Transverse colon (tissue), 4 donors: ENCODE measurements at regions of chr2 and their contacts with region 1.

Region 1: DNA sequence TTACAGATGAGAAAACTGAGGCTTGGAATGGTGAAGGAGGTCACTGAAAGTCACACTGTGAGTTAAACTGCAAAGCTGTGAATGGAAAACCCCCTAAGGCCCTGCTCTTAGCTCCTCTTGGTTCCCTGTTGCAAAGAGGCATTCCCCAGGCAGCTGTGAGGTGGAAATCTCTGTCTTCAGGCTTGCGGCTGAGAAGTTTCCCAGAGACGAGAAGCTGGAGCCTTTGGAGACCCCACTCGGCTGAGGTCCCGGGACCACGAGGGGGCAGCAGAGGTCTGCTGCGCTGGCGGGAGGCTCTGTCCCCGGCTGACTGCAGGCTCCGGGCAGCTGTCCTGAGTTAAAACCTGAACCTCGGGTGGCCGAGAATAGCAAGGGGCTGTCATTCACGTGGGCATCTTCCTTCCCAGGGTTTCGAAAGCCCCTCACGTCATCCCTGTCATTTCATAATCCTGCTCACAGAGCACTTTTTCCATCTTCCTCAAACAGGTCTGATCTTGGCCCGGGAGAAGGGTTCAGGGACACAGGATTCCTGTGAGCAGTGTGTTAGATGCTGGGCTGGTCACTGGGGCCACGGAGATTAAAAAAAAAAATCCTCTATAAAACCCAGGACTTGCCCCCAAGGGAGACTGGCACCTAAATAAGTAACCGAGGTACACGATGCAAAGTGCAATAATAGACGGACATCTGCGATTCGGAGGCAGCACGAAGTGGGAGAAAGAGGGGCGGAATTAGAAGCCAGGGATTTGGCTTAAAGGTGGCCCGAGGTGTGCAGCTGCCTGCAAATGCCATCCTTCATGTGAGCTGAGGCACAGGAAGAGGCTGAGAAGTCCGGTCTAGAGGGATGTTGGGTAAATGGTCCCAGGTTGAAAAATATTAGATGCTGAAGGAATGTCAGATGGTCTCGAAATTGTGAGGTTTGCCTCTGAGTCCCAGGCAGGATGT is 24.6 kb upstream of the ATOH8 start:
- DNase-seq: peak; percentile 89
- H3K4me3 ChIP-seq: no peak overlapping the region
- H3K27ac ChIP-seq: no peak overlapping the region
- H3K4me1 ChIP-seq: peaks cover 0 to 11% (median 4%) of the 10 kb centered on the region in 4 donors
- H3K27me3 ChIP-seq: peaks cover 4% of the 10 kb centered on the region
- CTCF ChIP-seq: peak; percentile 88 to 94 (median 90)
- EP300 ChIP-seq: no peak
- POLR2A ChIP-seq: no peak

Region 2: GRCh38 chr2:85662899-85663593 is 66.1 kb before region 1 on chr2:
- in situ Hi-C with region 1: no loop called
- intact Hi-C with region 1: no loop called
- DNase-seq: no peak
- H3K4me3 ChIP-seq: no peak overlapping the region
- H3K27ac ChIP-seq: no peak overlapping the region
- H3K4me1 ChIP-seq: no peaks in the 10 kb centered on the region
- H3K27me3 ChIP-seq: no peaks in the 10 kb centered on the region
- CTCF ChIP-seq: no peak
- EP300 ChIP-seq: no peak
- POLR2A ChIP-seq: no peak

Region 3: DNA sequence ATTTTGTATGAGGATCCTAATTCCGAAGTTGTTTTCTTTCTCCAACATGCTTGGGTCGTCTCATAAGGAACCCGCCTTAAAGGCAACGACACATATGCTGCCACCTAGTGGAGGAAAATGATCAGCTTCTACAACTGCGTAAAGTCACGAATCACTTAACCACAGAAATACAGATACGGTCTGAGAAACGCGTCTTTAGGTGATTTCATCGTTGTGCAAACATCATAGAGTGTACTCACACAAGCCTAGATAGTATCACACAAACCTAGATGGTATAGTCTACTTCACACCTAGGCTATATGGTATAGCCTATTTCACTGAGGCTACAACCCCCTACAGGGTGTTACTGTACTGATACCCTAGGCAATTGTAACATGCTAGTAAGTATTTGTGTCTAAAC is 21.9 kb before region 1 on chr2:
- in situ Hi-C with region 1: no loop called
- intact Hi-C with region 1: no loop called
- DNase-seq: peak; percentile 58
- H3K4me3 ChIP-seq: no peak overlapping the region
- H3K27ac ChIP-seq: peak overlapping the region in 3 of 4 donors; percentile 39 to 58 (median 42)
- H3K4me1 ChIP-seq: peaks cover 0 to 47% (median 6%) of the 10 kb centered on the region in 4 donors
- H3K27me3 ChIP-seq: no peaks in the 10 kb centered on the region
- CTCF ChIP-seq: peak; percentile 80 to 90 (median 87)
- EP300 ChIP-seq: no peak
- POLR2A ChIP-seq: no peak

Region 4: DNA sequence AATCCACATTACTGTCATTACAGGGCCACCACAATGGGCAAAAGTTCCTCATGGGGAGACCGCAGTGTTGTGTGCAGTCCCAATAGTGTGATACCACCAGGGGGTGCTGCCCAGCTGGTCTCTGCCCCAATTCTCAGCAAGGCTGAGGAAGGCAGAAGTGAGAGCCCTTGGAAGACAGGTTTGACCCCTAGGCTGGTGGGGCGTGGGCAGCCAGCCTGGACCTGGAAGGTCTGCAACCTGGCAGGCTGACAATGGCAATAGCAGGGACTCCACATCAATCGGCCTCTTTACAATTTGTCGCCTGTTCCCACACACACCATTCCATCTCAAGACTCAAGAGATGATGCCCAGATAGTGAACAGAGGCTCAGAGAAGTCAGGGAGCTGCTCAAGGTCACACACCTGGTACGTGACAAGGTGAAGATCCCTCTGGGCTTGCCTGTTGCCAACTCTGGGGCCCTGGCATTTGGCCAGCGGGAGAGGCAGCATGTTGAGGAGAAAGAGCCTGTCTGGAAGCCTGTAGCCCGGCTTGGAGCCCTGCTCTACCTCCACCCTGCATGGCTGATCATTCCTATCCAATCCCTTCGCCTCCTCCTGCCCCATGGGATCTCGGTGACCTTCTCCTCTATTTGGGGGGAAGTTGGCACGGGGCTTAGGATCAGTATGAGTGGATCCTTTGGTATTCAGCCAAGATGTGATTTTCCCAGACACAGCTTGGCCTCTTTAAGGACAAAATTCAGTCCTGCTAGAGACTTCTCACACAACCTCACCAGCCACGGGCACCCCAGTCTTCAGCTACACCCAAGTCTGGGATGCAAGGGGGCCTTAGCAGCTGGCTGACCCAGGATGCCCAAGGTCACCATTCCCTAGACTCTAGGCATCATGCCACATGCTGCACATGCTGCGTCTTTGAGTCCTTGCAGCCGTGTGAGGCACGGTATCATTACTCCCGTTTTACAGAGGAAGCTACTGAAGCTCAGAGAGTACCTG is 21.7 kb after region 1 on chr2:
- in situ Hi-C with region 1: no loop called
- intact Hi-C with region 1: no loop called
- DNase-seq: peak; percentile 75
- H3K4me3 ChIP-seq: no peak overlapping the region
- H3K27ac ChIP-seq: peak overlapping the region in 1 of 4 donors; percentile 23
- H3K4me1 ChIP-seq: peaks cover 18 to 55% (median 40%) of the 10 kb centered on the region in 4 donors
- H3K27me3 ChIP-seq: peaks cover 38% of the 10 kb centered on the region
- CTCF ChIP-seq: peak; percentile 69 to 81 (median 77)
- EP300 ChIP-seq: no peak
- POLR2A ChIP-seq: no peak

Region 5: GRCh38 chr2:85772019-85772745 is 43.0 kb after region 1 on chr2:
- in situ Hi-C with region 1: no loop called
- intact Hi-C with region 1: loop called (anchors 2 kb)
- DNase-seq: peak; percentile 91
- H3K4me3 ChIP-seq: peak overlapping the region in 1 of 4 donors; percentile 6
- H3K27ac ChIP-seq: peak overlapping the region; percentile 82 to 93 (median 84)
- H3K4me1 ChIP-seq: peaks cover 59 to 69% (median 62%) of the 10 kb centered on the region in 4 donors
- H3K27me3 ChIP-seq: no peaks in the 10 kb centered on the region
- CTCF ChIP-seq: peak in 3 of 5 experiments; percentile 20 to 34 (median 23)
- EP300 ChIP-seq: peak; percentile 76
- POLR2A ChIP-seq: no peak